Naive thymus-derived CD4-positive, alpha-beta T cell (primary cell): ENCODE measurements at regions of chr12 and their contacts with region 1.

Region 1: DNA sequence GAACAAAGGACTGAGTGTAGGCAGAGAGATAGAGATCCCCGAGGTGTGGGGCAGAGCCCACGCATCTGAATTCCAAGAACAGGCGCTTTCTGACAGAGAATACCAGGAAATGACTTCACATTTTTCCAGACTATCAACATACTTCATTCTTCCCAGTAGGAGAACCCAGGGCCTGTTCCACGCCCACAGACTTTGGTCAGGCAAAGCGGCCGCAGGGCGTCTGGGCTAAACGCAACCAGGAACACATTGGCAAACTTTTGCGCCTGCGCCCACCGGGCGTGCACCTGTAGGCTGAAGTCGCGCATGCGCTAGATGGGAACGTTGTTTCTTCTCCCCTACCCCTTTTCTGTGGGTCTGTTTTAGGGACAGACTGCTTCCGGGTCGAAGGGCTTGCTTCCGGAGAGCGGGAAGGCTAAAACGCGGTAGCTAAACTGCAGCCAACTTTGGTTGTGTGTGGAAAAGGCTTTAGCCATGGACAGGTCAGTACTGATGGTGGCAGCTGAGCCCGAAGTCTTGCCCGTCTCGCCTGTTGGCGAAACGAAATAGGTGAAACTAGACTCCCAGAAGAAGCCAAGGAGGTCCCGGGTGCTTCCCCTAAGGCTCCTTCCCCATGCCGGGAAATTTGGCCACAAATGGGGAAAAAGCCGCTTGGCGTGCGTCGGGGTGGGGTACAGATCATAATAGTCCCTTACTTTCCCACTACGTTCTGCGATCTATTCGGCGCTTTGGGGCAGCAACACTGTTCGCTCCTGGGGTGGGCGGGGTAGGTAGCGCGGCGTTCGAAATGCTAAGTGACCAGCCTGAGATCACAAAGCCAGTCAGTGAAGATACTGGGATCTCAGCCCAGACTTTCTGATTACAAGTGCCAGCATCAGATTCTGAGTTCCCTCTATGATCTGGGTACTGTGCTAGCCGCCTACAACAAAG is at the start of gene NUP107:
- DNase-seq: peak; percentile 92 to 97 (median 95)
- ATAC-seq: peak; percentile 99
- H3K4me3 ChIP-seq: peak within 1 kb of the TSS; percentile 90
- H3K4me3 Mint-ChIP-seq: peak within 1 kb of the TSS; percentile 94 to 100 (median 98)
- H3K27ac ChIP-seq: peak within 1 kb of the TSS; percentile 85
- H3K27ac Mint-ChIP-seq: peak within 1 kb of the TSS; percentile 96 to 100 (median 99)
- H3K4me1 ChIP-seq: peaks cover 13 to 16% of the 10 kb centered on the region in 2 donors
- H3K4me1 Mint-ChIP-seq: peaks cover 10 to 51% (median 42%) of the 10 kb centered on the region in 7 donors
- H3K27me3 ChIP-seq: no peaks in the 10 kb centered on the region
- H3K27me3 Mint-ChIP-seq: peaks cover 0 to 2% (median 0%) of the 10 kb centered on the region in 5 donors
- total RNA-seq, gene NUP107: 45.2 to 80.9 (median 69.0) TPM

Region 2: DNA sequence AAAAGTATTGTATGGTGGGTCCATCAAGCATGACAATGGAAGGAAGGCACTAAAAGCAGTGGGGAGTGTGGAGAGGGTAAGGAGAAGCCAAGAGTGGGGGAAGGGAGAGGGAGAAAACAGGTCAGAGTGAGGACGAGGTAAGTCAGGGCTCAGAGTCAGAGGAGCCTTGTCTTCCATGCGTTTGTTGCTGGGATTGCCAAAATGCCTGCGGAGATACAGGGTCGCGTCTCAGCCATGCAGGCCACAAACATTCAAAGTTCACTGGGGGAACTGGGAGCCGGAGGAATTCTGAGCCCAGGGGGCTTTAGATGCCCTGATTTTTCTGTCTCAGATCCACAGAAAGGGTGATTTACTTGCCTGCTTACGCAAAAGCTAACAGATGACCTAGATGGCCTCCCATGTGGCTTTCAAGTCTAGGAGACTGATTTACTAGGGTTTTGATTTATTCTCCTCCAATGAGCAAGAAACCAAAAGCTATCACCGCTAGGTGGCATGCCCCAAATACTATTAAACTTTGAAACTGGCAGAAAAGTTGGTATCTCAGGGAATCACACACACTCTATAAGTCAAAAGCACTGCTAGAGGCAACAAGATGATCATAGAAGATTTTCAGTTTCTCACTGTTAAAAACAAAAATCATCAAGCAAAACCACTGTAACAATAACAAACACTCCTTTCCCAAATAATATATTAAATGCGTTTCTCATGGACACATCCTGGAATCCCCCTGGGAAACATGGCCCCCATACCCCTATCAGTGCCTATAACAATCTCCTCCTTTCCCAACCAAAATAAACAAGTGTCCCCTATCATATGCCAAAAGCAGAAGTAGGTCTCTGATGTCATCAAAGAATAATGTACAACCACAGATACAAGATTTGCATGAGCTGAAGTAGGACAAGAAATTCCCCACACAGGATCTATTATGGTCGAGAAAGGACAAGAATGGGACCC is 328.0 kb before region 1 on chr12:
- CTCF ChIA-PET with region 1: no interaction called
- POLR2A ChIA-PET with region 1: interaction called, 4 read pairs
- intact Hi-C with region 1: loop called (anchors 1 kb)
- DNase-seq: peak in 7 of 9 donors; percentile 56 to 80 (median 76)
- ATAC-seq: peak; percentile 84
- H3K4me3 ChIP-seq: no peak overlapping the region
- H3K4me3 Mint-ChIP-seq: peak overlapping the region in 1 of 10 donors; percentile 38
- H3K27ac ChIP-seq: no peak overlapping the region
- H3K27ac Mint-ChIP-seq: peak overlapping the region in 2 of 9 donors; percentile 56 to 72
- H3K4me1 ChIP-seq: peaks cover 13 to 17% of the 10 kb centered on the region in 2 donors
- H3K4me1 Mint-ChIP-seq: peaks cover 25 to 36% (median 30%) of the 10 kb centered on the region in 7 donors
- H3K27me3 ChIP-seq: no peaks in the 10 kb centered on the region
- H3K27me3 Mint-ChIP-seq: no peaks in the 10 kb centered on the region

Region 3: GRCh38 chr12:68470664-68471328 is 216.1 kb before region 1 on chr12:
- CTCF ChIA-PET with region 1: no interaction called
- POLR2A ChIA-PET with region 1: no interaction called
- intact Hi-C with region 1: no loop called
- DNase-seq: no peak
- ATAC-seq: no peak
- H3K4me3 ChIP-seq: no peak overlapping the region
- H3K4me3 Mint-ChIP-seq: no peak overlapping the region
- H3K27ac ChIP-seq: no peak overlapping the region
- H3K27ac Mint-ChIP-seq: peak overlapping the region in 4 of 9 donors; percentile 2 to 70 (median 21)
- H3K4me1 ChIP-seq: no peaks in the 10 kb centered on the region
- H3K4me1 Mint-ChIP-seq: peaks cover 0 to 10% (median 4%) of the 10 kb centered on the region in 7 donors
- H3K27me3 ChIP-seq: no peaks in the 10 kb centered on the region
- H3K27me3 Mint-ChIP-seq: no peaks in the 10 kb centered on the region

Region 4: DNA sequence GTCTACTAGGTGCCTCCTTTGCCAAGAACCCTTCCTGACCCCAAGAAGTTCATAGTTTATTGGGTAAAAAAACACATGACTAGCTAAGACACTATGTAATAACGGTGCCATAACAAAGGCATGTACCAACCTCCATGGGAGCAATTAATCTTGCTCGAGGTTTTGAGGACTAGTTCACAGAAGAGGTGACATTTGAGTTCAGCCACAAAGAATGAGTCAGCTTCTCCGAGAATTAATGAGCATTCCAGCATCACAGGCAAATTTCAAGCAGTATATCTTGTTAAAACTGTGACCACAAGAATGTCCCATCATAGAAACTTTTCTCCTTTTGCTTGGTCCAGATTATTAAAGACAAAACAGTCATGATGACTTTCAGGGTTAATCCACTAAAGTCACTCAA is 189.2 kb before region 1 on chr12:
- CTCF ChIA-PET with region 1: no interaction called
- POLR2A ChIA-PET with region 1: no interaction called
- intact Hi-C with region 1: loop called in 1 of 2 experiments (anchors 1 kb)
- DNase-seq: no peak
- ATAC-seq: peak; percentile 26
- H3K4me3 ChIP-seq: no peak overlapping the region
- H3K4me3 Mint-ChIP-seq: peak overlapping the region in 1 of 10 donors; percentile 50
- H3K27ac ChIP-seq: no peak overlapping the region
- H3K27ac Mint-ChIP-seq: peak overlapping the region in 1 of 9 donors; percentile 73
- H3K4me1 ChIP-seq: peaks cover 0 to 7% of the 10 kb centered on the region in 2 donors
- H3K4me1 Mint-ChIP-seq: peaks cover 0 to 29% (median 18%) of the 10 kb centered on the region in 7 donors
- H3K27me3 ChIP-seq: no peaks in the 10 kb centered on the region
- H3K27me3 Mint-ChIP-seq: no peaks in the 10 kb centered on the region

Region 5: GRCh38 chr12:68641138-68641537 is 45.7 kb before region 1 on chr12:
- CTCF ChIA-PET with region 1: interaction called, 8 read pairs
- POLR2A ChIA-PET with region 1: no interaction called
- intact Hi-C with region 1: loop called in 1 of 2 experiments (anchors 5 kb)
- DNase-seq: peak in 8 of 9 donors; percentile 15 to 45 (median 29)
- ATAC-seq: peak; percentile 73
- H3K4me3 ChIP-seq: no peak overlapping the region
- H3K4me3 Mint-ChIP-seq: peak overlapping the region; percentile 17 to 81 (median 74)
- H3K27ac ChIP-seq: peak overlapping the region; percentile 57
- H3K27ac Mint-ChIP-seq: peak overlapping the region; percentile 39 to 90 (median 83)
- H3K4me1 ChIP-seq: peaks cover 65% of the 10 kb centered on the region in 2 donors
- H3K4me1 Mint-ChIP-seq: peaks cover 47 to 96% (median 86%) of the 10 kb centered on the region in 7 donors
- H3K27me3 ChIP-seq: no peaks in the 10 kb centered on the region
- H3K27me3 Mint-ChIP-seq: no peaks in the 10 kb centered on the region

Region 6: DNA sequence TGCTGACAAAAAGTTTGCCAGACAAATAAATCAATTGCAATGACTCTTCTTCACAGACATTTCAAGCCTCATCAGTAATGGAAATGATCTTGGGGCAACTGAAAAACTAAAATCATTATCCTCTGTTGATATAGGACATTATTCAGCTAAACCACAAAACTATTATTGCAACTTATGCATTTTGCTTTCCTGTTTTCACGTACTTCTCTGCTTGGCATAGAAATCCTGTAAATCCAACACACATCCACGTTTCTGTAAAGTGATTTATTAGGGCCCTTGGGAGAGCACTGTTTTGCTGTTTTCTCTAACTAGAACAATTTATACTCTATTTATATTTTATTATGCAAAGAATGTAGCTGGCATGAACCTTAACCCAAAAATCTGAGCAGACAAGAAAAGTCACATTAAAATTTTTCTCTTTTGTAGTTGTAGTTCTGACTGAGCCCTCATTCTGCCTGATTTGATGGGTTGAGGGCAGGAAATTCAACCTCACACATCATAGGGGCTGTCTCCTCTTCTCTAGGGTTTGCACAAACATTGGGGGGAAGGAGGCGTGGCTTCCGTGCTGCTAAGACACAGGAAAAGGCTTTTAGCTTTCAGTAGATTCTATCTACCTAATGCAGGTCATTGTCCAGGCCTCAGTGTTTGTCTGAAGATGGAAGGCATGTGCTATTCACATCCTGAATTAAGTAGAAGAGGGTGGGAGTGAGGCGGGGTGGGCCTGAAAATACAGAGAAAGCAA is 11.6 kb before region 1 on chr12:
- CTCF ChIA-PET with region 1: interaction called, 5 read pairs
- POLR2A ChIA-PET with region 1: interaction called, 15 read pairs
- intact Hi-C with region 1: loop called (anchors 1 kb)
- DNase-seq: peak; percentile 30 to 87 (median 78)
- ATAC-seq: peak; percentile 98
- H3K4me3 ChIP-seq: peak overlapping the region; percentile 17
- H3K4me3 Mint-ChIP-seq: peak overlapping the region; percentile 55 to 90 (median 80)
- H3K27ac ChIP-seq: peak overlapping the region; percentile 46
- H3K27ac Mint-ChIP-seq: peak overlapping the region; percentile 83 to 95 (median 89)
- H3K4me1 ChIP-seq: peaks cover 30 to 32% of the 10 kb centered on the region in 2 donors
- H3K4me1 Mint-ChIP-seq: peaks cover 27 to 73% (median 63%) of the 10 kb centered on the region in 7 donors
- H3K27me3 ChIP-seq: no peaks in the 10 kb centered on the region
- H3K27me3 Mint-ChIP-seq: no peaks in the 10 kb centered on the region